PC-3 (cell line): ENCODE measurements at regions of chr6 and their contacts with region 1.

Region 1: GRCh38 chr6:129632172-129632613 is 77.8 kb downstream of the ARHGAP18 start:
- DNase-seq: no peak
- ATAC-seq: no peak
- H3K4me3 ChIP-seq: no peak overlapping the region
- H3K27ac ChIP-seq: no peak overlapping the region
- H3K4me1 ChIP-seq: peaks cover 4% of the 10 kb centered on the region
- H3K27me3 ChIP-seq: no peaks in the 10 kb centered on the region
- CTCF ChIP-seq: no peak

Region 2: GRCh38 chr6:128641701-128642100 is 990.5 kb before region 1 on chr6:
- CTCF ChIA-PET with region 1: no interaction called
- POLR2A ChIA-PET with region 1: no interaction called
- intact Hi-C with region 1: loop called (anchors 5 kb)
- DNase-seq: no peak
- ATAC-seq: no peak
- H3K4me3 ChIP-seq: no peak overlapping the region
- H3K27ac ChIP-seq: no peak overlapping the region
- H3K4me1 ChIP-seq: peaks cover 9% of the 10 kb centered on the region; the same call in 1 of the 2 replicates
- H3K27me3 ChIP-seq: no peaks in the 10 kb centered on the region
- CTCF ChIP-seq: no peak

Region 3: DNA sequence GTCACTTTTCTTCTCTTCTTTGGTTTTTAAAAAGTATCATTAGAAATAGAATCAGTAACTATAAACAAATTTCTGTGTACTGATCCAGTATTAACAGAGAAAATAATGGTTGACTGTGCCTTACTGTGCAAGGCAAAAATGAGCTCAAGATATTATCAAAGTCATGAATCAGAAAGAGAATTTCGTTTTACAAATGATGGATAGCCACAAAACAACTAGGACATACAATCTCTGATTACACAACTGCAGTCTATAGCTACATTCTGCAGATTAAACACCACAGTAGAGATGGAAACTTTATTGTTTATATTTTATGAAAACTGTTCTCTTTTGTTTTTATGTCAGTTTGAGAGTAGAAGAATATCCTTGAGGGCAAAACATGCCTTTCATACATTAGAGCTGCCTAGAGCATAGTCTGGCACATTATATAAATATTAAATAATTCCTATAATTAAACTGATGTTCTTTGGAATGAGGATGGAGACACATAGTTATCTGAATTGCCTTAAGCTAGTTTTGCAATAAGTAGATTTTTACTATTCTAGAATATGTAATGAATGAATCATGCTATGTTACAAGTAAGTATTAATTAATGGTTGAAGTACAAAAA is 416.2 kb before region 1 on chr6:
- CTCF ChIA-PET with region 1: no interaction called
- POLR2A ChIA-PET with region 1: no interaction called
- intact Hi-C with region 1: no loop called
- DNase-seq: no peak
- ATAC-seq: no peak
- H3K4me3 ChIP-seq: no peak overlapping the region
- H3K27ac ChIP-seq: no peak overlapping the region
- H3K4me1 ChIP-seq: no peaks in the 10 kb centered on the region
- H3K27me3 ChIP-seq: no peaks in the 10 kb centered on the region
- CTCF ChIP-seq: no peak

Region 4: GRCh38 chr6:129709769-129710449 is 77.7 kb after region 1 on chr6 and contains the start of gene ARHGAP18:
- CTCF ChIA-PET with region 1: no interaction called
- POLR2A ChIA-PET with region 1: interaction called, 15 read pairs
- intact Hi-C with region 1: no loop called
- DNase-seq: peak; percentile 92
- ATAC-seq: peak; percentile 98
- H3K4me3 ChIP-seq: peak within 1 kb of the TSS; percentile 73
- H3K27ac ChIP-seq: peak within 1 kb of the TSS; percentile 55
- H3K4me1 ChIP-seq: peaks cover 17% of the 10 kb centered on the region; the same call in 1 of the 2 replicates
- H3K27me3 ChIP-seq: no peaks in the 10 kb centered on the region
- CTCF ChIP-seq: no peak
- total RNA-seq, gene ARHGAP18: 4.1 and 5.9 TPM in 2 replicates